ENCODE measurements at regions of chr3 and their contacts with region 1.

Region 1: DNA sequence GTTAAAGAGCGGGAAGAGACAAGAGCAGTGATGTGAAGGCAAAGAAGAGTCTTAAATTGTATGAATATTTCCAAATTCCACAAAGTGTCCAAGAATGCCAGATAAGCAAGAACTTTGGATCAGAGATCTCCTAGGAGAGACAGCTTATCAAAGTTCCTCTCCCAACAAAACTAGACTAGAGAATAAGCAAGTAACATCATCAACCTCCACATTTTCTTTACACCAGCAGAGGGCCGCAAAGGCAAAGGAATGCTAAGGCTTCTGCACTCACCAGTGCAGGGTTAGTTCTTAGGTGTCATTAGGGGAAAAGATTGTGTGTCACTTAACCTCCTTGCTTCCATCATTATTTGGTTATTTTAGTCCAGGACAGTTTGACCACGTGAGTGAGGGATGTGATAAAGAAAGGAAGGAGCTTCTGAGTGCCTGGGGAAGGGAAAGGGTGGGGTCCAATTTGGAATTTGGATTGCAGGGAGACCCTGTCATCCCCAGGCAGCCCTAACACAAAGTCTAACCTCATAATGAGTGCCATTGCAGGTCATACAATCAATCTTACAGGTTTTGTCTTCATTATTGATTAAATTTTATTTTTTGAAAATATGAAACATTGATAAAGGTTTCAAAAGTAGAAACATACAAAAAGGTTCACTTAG is 7.5 kb upstream of the CMTM6 start:
- DNase-seq: peak in 3 of 4 donors; percentile 47 to 84 (median 62)
- ATAC-seq: peak; percentile 98
- H3K4me3 ChIP-seq: no peak overlapping the region
- H3K27ac ChIP-seq: no peak overlapping the region
- H3K4me1 ChIP-seq: no peaks in the 10 kb centered on the region
- H3K27me3 ChIP-seq: no peaks in the 10 kb centered on the region
- CTCF ChIP-seq: peak; percentile 54 to 63

Region 2: GRCh38 chr3:32667122-32667521 is 156.9 kb after region 1 on chr3:
- intact Hi-C with region 1: loop called in 1 of 2 experiments (anchors 5 kb)
- DNase-seq: no peak
- ATAC-seq: no peak
- H3K4me3 ChIP-seq: no peak overlapping the region
- H3K27ac ChIP-seq: no peak overlapping the region
- H3K4me1 ChIP-seq: peaks cover 0 to 3% of the 10 kb centered on the region in 2 donors
- H3K27me3 ChIP-seq: no peaks in the 10 kb centered on the region
- CTCF ChIP-seq: no peak

Region 3: GRCh38 chr3:32684800-32685542 is 174.8 kb after region 1 on chr3 and contains the start of gene CNOT10:
- intact Hi-C with region 1: no loop called
- DNase-seq: peak; percentile 89 to 100 (median 96)
- ATAC-seq: peak; percentile 100
- H3K4me3 ChIP-seq: peak within 1 kb of the TSS; percentile 89 to 92
- H3K27ac ChIP-seq: peak within 1 kb of the TSS; percentile 85 to 95
- H3K4me1 ChIP-seq: peaks cover 0 to 20% of the 10 kb centered on the region in 2 donors
- H3K27me3 ChIP-seq: no peaks in the 10 kb centered on the region
- CTCF ChIP-seq: peak; percentile 9 to 44
- polyA plus RNA-seq, gene CNOT10: 46.3 to 61.8 (median 53.4) TPM

Region 4: DNA sequence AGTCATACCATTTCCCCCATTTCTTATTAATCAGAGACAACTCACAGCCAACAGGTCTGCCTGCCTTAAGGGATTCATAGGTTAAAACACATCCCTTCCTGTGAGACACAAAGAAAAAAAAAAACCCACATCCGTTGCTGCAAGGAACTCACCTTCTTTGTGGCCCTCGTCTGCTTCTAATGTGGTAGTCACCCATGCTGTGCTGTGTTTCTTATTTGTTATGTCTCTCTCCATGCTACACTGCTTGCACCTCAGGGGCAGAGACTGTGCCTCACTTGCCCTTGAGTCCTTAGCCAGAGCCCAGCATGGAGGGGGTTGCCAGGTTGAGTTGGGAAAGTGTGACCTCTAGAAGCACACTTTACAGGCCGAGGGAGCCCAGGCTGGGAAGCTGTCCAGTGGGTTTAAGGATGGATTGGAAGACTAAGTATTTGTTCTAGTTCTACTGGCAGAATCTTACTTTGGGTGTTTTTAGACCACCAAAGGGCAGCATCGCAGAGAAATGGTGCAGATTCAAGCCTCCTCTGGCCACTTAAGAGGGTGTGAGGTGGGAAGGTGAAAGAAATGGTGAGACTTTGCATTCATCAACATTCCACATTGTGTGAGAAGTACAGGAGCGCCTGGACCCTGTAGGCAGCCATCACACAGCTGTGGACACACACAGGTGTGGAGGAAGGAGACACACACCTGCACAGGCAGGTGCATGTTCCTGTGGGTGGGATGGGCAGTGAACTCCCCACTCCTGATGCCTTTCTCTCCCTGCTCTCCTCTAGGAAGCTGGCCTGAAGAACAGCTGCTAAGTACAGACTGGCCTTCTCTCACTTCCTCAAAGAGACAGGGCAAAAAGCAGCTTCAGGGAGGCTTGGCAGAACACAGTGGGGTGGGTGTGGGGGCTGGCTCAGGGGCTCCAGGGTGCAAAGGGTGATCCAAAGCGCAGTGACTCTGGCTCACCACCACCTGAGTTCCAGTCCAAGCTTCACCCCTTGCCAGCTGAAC is 537.9 kb after region 1 on chr3:
- intact Hi-C with region 1: no loop called
- DNase-seq: no peak
- ATAC-seq: peak; percentile 37
- H3K4me3 ChIP-seq: no peak overlapping the region
- H3K27ac ChIP-seq: peak overlapping the region in 1 of 2 donors; percentile 20
- H3K4me1 ChIP-seq: peaks cover 0 to 21% of the 10 kb centered on the region in 2 donors
- H3K27me3 ChIP-seq: no peaks in the 10 kb centered on the region
- CTCF ChIP-seq: no peak

Measured in left lung (tissue), 14 donors.